ENCODE measurements at regions of chr21 and their contacts with region 1.

Region 1: DNA sequence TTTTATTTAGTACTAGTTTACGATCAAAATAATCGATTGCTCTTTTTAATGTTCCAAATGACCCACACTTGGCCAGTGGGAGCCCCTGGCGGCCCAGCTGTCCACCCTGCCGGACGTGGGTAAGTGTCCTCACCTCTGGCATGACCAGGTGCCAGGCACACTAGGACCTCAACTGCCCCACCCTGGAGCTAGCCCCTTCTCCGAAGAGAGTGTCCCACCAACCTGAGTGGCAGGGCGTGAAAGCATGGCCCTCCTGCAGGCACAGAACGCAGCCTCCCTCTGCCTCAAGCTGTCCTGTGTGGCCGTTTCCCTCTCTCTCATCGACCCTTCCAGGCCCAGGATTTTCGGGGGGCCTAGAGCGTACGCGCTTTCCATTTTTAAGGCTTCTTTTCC is 32.9 kb upstream of the AGPAT3 start:
- DNase-seq: no peak
- ATAC-seq: no peak
- H3K4me3 ChIP-seq: no peak overlapping the region
- H3K27ac ChIP-seq: no peak overlapping the region
- H3K4me1 ChIP-seq: no peaks in the 10 kb centered on the region; the same call in 1 of the 2 replicates
- H3K27me3 ChIP-seq: no peaks in the 10 kb centered on the region
- CTCF ChIP-seq: no peak

Region 2: GRCh38 chr21:42818328-42818749 is 1013.8 kb before region 1 on chr21:
- CTCF ChIA-PET with region 1: no interaction called
- POLR2A ChIA-PET with region 1: no interaction called
- in situ Hi-C with region 1: no loop called
- intact Hi-C with region 1: no loop called
- DNase-seq: no peak
- ATAC-seq: peak; percentile 72; the same call in 1 of the 2 replicates
- H3K4me3 ChIP-seq: no peak overlapping the region
- H3K27ac ChIP-seq: no peak overlapping the region
- H3K4me1 ChIP-seq: no peaks in the 10 kb centered on the region
- H3K27me3 ChIP-seq: no peaks in the 10 kb centered on the region
- CTCF ChIP-seq: peak; percentile 72

Region 3: DNA sequence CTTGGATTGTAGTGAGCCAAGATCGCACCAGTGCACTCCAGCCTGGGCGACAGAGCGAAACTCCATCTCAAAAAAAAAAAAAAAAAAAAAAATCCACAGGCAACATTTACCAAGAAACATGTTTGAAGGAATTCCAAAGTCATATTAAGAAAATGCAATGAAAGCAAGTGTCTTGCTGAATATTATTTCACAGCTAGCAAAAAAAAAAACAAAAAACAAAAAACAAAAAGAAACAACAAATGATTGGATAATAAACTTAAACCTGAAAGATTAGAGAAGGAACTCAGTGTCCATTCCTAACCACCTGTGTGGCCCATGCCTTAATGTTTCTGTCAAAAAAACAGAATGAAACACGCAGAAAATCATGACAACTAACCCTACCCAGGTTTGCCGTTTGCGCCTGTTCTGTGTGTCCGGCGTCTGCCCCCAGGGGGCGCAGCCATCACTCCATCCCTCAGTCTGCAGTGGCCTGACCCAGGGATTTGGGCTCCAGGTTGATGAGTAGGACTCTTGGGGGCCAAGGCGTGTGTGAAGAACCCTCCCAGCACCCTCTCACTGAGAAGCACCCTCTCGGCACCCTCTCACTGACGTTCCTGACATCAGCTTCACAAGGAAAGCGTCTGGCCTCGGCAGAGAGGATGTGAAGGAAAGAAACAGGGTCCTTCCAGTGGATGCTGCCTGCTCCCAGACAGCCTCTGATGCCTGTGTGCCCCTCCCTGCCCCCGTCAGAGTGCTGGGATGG is 1060.6 kb after region 1 on chr21:
- CTCF ChIA-PET with region 1: interaction called, 11 read pairs
- POLR2A ChIA-PET with region 1: no interaction called
- in situ Hi-C with region 1: no loop called
- intact Hi-C with region 1: no loop called
- DNase-seq: no peak
- ATAC-seq: peak; percentile 83
- H3K4me3 ChIP-seq: no peak overlapping the region
- H3K27ac ChIP-seq: no peak overlapping the region
- H3K4me1 ChIP-seq: no peaks in the 10 kb centered on the region
- H3K27me3 ChIP-seq: no peaks in the 10 kb centered on the region
- CTCF ChIP-seq: peak; percentile 92

Measured in Panc1 (cell line).